ENCODE measurements at regions of chr10 and their contacts with region 1.

Region 1: GRCh38 chr10:95601116-95601719 is 40.0 kb upstream of the SORBS1 start:
- DNase-seq: peak; percentile 84 to 91
- H3K4me3 ChIP-seq: no peak overlapping the region
- H3K27ac ChIP-seq: peak overlapping the region in 1 of 2 donors; percentile 63
- H3K4me1 ChIP-seq: peaks cover 0 to 4% of the 10 kb centered on the region in 2 donors
- H3K27me3 ChIP-seq: no peaks in the 10 kb centered on the region
- CTCF ChIP-seq: peak; percentile 95 to 97 (median 96)
- POLR2A ChIP-seq: no peak

Region 2: GRCh38 chr10:95297402-95297801 is 303.8 kb before region 1 on chr10:
- intact Hi-C with region 1: no loop called
- DNase-seq: no peak
- H3K4me3 ChIP-seq: no peak overlapping the region
- H3K27ac ChIP-seq: no peak overlapping the region
- H3K4me1 ChIP-seq: no peaks in the 10 kb centered on the region
- H3K27me3 ChIP-seq: no peaks in the 10 kb centered on the region
- CTCF ChIP-seq: no peak
- POLR2A ChIP-seq: no peak

Region 3: GRCh38 chr10:95374597-95375209 is 226.5 kb before region 1 on chr10:
- intact Hi-C with region 1: loop called (anchors 5 kb)
- DNase-seq: peak; percentile 78 to 86
- H3K4me3 ChIP-seq: no peak overlapping the region
- H3K27ac ChIP-seq: peak overlapping the region in 1 of 2 donors; percentile 79
- H3K4me1 ChIP-seq: peaks cover 0 to 4% of the 10 kb centered on the region in 2 donors
- H3K27me3 ChIP-seq: no peaks in the 10 kb centered on the region
- CTCF ChIP-seq: peak; percentile 82 to 91 (median 88)
- POLR2A ChIP-seq: no peak

Region 4: GRCh38 chr10:95430231-95430951 is 170.8 kb before region 1 on chr10:
- intact Hi-C with region 1: loop called (anchors 5 kb)
- DNase-seq: peak; percentile 53 to 74
- H3K4me3 ChIP-seq: no peak overlapping the region
- H3K27ac ChIP-seq: peak overlapping the region; percentile 65 to 93
- H3K4me1 ChIP-seq: peaks cover 0 to 11% of the 10 kb centered on the region in 2 donors
- H3K27me3 ChIP-seq: no peaks in the 10 kb centered on the region
- CTCF ChIP-seq: peak; percentile 93 to 96 (median 96)
- POLR2A ChIP-seq: no peak

Region 5: GRCh38 chr10:95716466-95717224 is 115.4 kb after region 1 on chr10:
- intact Hi-C with region 1: no loop called
- DNase-seq: no peak
- H3K4me3 ChIP-seq: no peak overlapping the region
- H3K27ac ChIP-seq: no peak overlapping the region
- H3K4me1 ChIP-seq: no peaks in the 10 kb centered on the region
- H3K27me3 ChIP-seq: no peaks in the 10 kb centered on the region
- CTCF ChIP-seq: no peak
- POLR2A ChIP-seq: no peak

Measured in uterus (tissue), 4 donors.